Aorta (tissue), 5 donors: ENCODE measurements at regions of chr2 and their contacts with region 1.

Region 1: DNA sequence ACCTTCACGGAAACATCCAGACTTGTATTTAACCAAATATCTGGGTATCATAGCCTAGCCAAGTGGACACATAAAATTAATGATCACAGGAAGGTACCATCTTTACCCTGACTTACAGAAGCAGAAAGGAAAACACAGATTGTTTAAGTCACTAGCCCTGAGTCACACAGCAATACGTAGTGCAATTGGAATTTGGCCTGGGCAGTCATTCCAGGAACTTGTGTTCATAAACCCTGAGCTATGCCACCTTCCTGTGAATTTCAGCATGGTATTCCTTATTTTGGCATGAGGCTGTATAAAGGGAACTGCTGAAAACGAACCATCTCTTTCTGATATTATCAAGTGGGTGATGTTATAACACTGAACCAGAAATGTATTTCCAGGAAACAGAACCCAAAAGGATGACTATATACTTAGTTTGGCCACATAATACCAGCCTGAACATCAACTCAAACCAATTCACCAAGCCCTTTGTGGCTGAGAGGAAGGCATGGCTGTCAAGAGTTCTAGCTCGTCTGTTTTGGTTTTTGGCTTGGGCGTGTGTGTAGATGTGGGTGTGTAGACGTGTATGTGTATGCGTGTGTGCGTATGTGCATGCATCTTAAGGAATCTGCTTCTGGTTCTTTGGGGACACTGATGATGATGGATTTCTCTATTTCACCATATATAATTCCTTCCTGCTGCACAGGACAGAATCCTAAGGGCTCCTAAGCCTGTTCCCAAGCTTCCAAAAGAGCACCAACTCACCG is 533.4 kb upstream of the ID2 start:
- DNase-seq: no peak
- ATAC-seq: peak; percentile 41
- H3K4me3 ChIP-seq: no peak overlapping the region
- H3K27ac ChIP-seq: peak overlapping the region in 1 of 2 donors; percentile 72
- H3K4me1 ChIP-seq: peaks cover 0 to 7% of the 10 kb centered on the region in 2 donors
- H3K27me3 ChIP-seq: no peaks in the 10 kb centered on the region

Region 2: GRCh38 chr2:7950035-7950612 is 198.3 kb before region 1 on chr2:
- intact Hi-C with region 1: loop called in 1 of 2 experiments (anchors 10 kb)
- DNase-seq: peak; percentile 62 to 83
- ATAC-seq: peak; percentile 75
- H3K4me3 ChIP-seq: no peak overlapping the region
- H3K27ac ChIP-seq: peak overlapping the region in 1 of 2 donors; percentile 34
- H3K4me1 ChIP-seq: peaks cover 0 to 3% of the 10 kb centered on the region in 2 donors
- H3K27me3 ChIP-seq: no peaks in the 10 kb centered on the region

Region 3: DNA sequence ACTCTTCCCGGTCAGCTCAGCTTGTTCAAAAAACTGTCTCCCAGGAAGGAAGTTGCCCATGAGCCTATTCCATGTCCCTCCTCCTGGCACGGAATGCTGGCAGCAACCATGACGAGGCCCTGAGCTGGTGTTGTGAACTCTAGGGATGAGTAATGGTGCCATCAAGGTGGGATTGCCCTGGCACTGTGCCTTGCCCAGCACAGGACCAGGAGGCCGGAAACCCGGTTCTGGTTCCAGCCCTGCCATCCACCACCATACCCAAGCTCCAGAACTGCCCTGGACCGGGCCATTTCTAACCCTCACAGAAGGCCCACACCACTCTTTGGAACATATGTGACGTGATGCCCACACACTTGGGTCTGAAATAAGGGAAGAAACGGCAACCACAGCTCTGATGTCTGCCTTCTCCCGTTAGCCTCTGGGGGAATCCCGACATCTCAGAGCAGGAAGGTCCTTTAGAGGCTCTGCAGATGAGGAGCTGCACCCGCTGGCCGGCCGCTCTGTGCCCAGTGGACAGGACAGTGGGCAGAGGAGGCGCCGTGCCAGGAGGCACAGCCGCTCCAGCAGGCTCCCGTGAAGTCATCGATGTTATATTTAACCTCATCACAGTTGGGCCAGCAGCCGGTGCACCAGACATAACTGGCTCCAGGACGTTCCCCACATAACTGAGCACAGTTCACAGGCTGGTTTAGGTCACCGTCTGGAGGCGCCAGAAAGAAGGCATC is 71.4 kb after region 1 on chr2:
- intact Hi-C with region 1: no loop called
- DNase-seq: peak; percentile 85 to 93
- ATAC-seq: peak; percentile 82
- H3K4me3 ChIP-seq: no peak overlapping the region
- H3K27ac ChIP-seq: peak overlapping the region; percentile 36 to 81
- H3K4me1 ChIP-seq: peaks cover 1 to 5% of the 10 kb centered on the region in 2 donors
- H3K27me3 ChIP-seq: no peaks in the 10 kb centered on the region